Activated T-helper 1 cell treated with anti-CD3 and anti-CD28 coated beads, Interleukin-12 subunit alpha, Interleukin-12 subunit beta, Interleukin-2, Interleukin-4 antibody, amounts not matched to agents 30 ng/mL and 10 ng/mL and 1 ng/mL, durations not matched to agents 14 hours and 24 hours and 36 hours (primary cell): ENCODE measurements at regions of chr5 and their contacts with region 1.

Region 1: DNA sequence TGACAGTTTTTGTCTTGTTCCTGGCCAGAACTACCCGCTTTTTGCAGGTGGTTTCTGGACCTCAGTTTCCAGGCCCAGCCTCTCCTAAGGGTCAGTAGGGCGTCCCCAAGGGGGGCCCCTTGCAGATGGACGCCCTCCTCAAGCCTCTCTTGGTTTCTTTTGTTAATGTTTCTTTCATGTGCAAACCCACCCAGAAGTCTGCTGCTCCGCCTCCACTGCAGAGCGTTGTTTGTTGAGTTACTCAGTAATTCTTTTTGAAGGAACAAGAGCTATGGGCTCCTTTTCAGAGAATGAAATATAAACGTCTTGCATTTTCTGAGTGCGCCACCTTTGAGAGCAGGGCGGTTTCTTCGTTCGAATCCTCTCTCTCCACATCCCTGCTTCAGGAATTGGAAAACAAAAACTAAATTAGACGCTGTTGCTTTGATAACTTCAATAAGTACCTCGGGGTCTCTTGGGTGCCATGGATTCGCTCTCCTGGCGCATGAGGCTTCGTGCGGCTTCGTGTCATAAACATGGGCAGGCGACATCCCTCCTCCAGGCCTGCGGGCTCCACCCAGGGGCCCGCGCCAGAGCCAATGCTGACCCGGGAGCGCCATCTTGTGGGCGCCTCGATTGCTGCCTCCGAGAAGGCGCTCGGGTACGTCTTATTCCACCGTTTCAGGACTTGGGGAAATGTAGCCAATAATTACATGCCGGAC is 38.3 kb upstream of the CKMT2 start:
- DNase-seq: peak; percentile 72
- H3K4me3 Mint-ChIP-seq: no peak overlapping the region
- H3K27ac Mint-ChIP-seq: peak overlapping the region; percentile 34
- H3K4me1 Mint-ChIP-seq: peaks cover 17% of the 10 kb centered on the region
- H3K27me3 Mint-ChIP-seq: peaks cover 3% of the 10 kb centered on the region

Region 2: DNA sequence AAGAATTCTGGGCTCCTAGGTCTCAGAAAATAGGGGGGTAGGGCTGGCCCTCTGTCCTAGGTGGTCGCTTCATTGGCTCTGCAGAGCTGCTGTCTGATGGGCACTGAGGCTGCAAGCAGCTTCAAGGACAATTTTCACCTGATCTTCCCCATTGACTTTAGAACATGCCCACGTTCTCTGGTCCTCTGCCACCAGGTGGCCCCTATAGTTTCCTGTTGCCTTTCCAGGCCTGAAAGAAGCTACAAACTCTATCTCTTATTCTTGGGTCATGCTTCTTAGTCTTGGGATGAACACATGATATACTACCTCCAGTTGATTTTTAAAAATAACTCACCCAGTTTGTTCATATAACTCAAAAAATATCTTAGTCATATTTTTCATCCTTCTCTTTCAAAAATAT is 848.7 kb before region 1 on chr5:
- intact Hi-C with region 1: loop called (anchors 5 kb)
- DNase-seq: no peak
- H3K4me3 Mint-ChIP-seq: no peak overlapping the region
- H3K27ac Mint-ChIP-seq: no peak overlapping the region
- H3K4me1 Mint-ChIP-seq: no peaks in the 10 kb centered on the region
- H3K27me3 Mint-ChIP-seq: no peaks in the 10 kb centered on the region

Region 3: DNA sequence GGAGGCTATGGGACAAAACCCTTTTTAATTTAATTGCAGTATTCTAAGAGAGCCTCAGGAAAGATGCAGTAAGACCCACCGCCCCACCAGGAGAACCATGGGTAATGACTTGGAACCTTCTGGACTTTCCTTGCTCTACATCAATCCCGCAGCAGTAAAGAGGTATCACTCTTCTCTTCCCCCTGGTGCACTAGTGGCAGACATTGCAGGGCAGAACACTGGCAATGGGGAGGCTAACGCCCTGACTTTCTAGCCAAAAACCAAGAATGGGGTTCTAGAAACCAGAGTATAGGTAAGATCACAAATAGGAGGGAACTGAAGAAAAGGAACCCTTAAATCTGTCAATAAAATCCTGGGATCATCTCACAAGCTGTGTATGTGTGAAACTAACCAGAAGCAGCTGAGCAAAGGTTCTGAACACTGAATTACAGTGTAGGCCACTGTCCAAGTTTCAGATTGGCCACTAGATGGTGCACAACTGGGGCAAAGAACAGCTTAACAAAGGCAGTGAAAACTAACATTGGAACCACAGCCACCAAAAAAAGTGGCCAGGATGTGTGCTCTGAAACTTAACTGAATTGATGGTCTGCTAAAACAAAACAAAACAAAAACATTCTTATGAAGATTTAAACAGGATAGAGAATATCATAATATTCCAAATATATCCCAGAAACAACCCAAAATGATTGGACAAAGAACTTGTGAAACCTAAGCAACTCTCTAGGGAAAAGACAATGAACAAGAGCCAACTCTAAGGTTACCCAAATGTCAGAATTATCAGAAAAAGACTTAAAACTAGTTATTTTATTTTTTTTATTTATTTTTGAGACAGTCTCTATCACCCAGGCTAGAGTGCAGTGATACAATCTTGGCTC is 713.5 kb before region 1 on chr5:
- intact Hi-C with region 1: loop called (anchors 1 kb)
- DNase-seq: peak; percentile 11
- H3K4me3 Mint-ChIP-seq: no peak overlapping the region
- H3K27ac Mint-ChIP-seq: no peak overlapping the region
- H3K4me1 Mint-ChIP-seq: peaks cover 6% of the 10 kb centered on the region
- H3K27me3 Mint-ChIP-seq: peaks cover 2% of the 10 kb centered on the region

Region 4: DNA sequence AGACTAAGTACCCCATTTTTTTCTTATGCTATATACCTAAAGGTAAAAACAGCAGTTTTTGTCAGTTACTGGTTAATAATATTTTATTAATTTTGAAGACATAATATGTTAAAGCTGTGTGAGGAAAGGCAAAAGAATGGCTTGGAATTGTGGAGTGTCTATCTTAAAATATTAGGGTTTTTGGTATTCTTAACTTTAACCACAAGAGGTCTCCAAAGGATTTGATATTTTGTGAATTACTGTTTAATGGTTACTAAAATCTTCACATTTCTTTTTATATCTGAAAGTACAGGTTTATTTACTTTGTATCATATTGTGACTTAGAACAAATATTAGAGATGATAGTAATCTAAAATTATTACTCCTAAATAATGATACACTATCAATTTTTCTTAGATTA is 508.0 kb before region 1 on chr5:
- intact Hi-C with region 1: loop called (anchors 1 kb)
- DNase-seq: no peak
- H3K4me3 Mint-ChIP-seq: no peak overlapping the region
- H3K27ac Mint-ChIP-seq: no peak overlapping the region
- H3K4me1 Mint-ChIP-seq: peaks cover 34% of the 10 kb centered on the region
- H3K27me3 Mint-ChIP-seq: no peaks in the 10 kb centered on the region

Region 5: GRCh38 chr5:81105261-81105877 is 89.4 kb before region 1 on chr5:
- intact Hi-C with region 1: loop called (anchors 1 kb)
- DNase-seq: no peak
- H3K4me3 Mint-ChIP-seq: peak overlapping the region; percentile 15
- H3K27ac Mint-ChIP-seq: no peak overlapping the region
- H3K4me1 Mint-ChIP-seq: peaks cover 32% of the 10 kb centered on the region
- H3K27me3 Mint-ChIP-seq: no peaks in the 10 kb centered on the region

Region 6: GRCh38 chr5:81165493-81166119 is 29.2 kb before region 1 on chr5:
- intact Hi-C with region 1: loop called (anchors 1 kb)
- DNase-seq: peak; percentile 34
- H3K4me3 Mint-ChIP-seq: no peak overlapping the region
- H3K27ac Mint-ChIP-seq: no peak overlapping the region
- H3K4me1 Mint-ChIP-seq: peaks cover 14% of the 10 kb centered on the region
- H3K27me3 Mint-ChIP-seq: no peaks in the 10 kb centered on the region